SK-N-SH (cell line): ENCODE measurements at regions of chr17 and their contacts with region 1.

Region 1: GRCh38 chr17:2054512-2055291 is at the start of gene HIC1:
- DNase-seq: peak; percentile 93
- H3K4me3 ChIP-seq: peak within 1 kb of the TSS; percentile 57 to 62
- H3K27ac ChIP-seq: peak within 1 kb of the TSS in 1 of 2 experiments; percentile 55; a peak in 1 of 4 replicates
- H3K4me1 ChIP-seq: peaks cover 0 to 6% of the 10 kb centered on the region in 2 experiments; a peak in 1 of 4 replicates
- H3K27me3 ChIP-seq: no peaks in the 10 kb centered on the region
- CTCF ChIP-seq: peak; percentile 72
- EP300 ChIP-seq: no peak; a peak in 1 of 4 replicates
- RAD21 ChIP-seq: peak; percentile 88
- polyA plus RNA-seq, gene HIC1: 3.8 and 6.4 TPM in 2 replicates

Region 2: DNA sequence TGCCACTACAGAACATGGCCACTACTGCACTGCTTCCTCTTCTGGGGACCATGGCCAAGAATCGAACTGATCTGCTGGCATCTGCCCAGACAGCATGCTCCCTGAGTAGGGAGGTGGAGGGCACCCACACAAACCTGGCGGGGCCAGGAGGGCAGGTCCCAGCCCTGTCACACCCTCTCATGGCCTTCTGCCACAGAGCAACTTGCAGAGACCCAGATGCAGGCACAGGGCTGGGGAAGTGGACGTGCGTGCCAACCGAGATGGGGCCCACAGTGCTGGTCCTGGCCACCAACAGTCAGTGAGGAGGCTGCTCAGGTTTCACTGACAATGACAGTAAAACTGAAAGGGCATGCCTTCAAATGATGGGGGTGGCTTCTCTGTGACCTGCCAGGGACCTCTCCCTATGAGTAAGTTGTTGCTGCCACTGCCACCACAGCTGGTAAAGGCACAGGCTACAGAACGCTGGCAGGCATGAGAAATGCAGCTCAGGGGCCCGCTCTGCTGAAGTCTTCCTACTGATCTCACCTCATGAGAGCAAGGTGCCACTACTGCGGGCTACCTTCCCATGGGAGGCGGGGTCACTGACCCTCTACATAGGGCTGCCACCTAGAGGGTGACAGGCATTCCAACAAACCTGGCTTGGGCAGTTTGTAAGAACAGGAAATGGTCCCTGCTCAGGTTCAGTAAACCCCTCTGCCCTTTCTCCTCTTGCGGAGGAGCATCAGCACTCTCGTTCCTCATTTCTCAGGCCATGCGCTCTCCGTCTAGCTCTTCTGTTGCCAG is 15.7 kb after region 1 on chr17:
- CTCF ChIA-PET with region 1: interaction called, 81 read pairs
- POLR2A ChIA-PET with region 1: interaction called, 3 read pairs
- DNase-seq: no peak
- H3K4me3 ChIP-seq: no peak overlapping the region
- H3K27ac ChIP-seq: peak overlapping the region in 1 of 2 experiments; percentile 8; a peak in 1 of 4 replicates
- H3K4me1 ChIP-seq: peaks cover 27 to 49% of the 10 kb centered on the region in 2 experiments; a peak in 3 of 4 replicates
- H3K27me3 ChIP-seq: no peaks in the 10 kb centered on the region
- CTCF ChIP-seq: no peak
- EP300 ChIP-seq: no peak
- RAD21 ChIP-seq: no peak

Region 3: DNA sequence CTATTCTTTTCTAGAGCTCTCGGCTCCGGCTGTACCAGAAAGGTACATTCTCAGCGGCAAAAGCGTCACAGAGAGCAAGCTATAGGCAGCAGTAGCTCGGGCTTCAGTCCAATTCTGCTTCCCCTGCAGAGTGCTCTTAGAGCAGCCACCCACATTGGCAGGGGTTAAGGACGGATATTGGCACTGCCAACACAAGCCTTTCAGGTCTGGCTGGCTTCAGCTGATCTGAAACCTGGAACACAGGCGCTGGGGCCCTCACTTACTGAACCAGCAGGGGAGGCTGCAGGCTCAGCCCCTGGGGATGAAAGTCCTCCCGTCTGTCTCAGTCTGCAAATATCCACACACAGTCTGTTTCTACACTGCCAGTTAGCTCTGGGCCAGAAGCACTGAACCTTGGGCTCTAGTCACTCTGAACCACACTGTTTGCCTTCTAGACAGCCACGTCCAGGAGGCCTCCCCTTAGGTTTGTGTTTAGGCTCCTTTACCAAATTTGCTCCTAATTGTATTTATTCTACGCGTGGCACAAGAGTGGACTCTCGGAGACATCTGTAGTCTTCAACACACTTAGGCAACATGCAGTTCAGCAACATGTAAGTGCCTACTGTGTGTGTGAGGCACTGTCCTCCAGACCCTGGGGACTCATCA is 40.3 kb after region 1 on chr17:
- CTCF ChIA-PET with region 1: interaction called, 27 read pairs
- POLR2A ChIA-PET with region 1: no interaction called
- DNase-seq: peak; percentile 37
- H3K4me3 ChIP-seq: no peak overlapping the region
- H3K27ac ChIP-seq: peak overlapping the region in 1 of 2 experiments; percentile 29; a peak in 1 of 4 replicates
- H3K4me1 ChIP-seq: peaks cover 13 to 19% of the 10 kb centered on the region in 2 experiments; a peak in 3 of 4 replicates
- H3K27me3 ChIP-seq: no peaks in the 10 kb centered on the region
- CTCF ChIP-seq: peak; percentile 55
- EP300 ChIP-seq: no peak
- RAD21 ChIP-seq: peak; percentile 72

Region 4: DNA sequence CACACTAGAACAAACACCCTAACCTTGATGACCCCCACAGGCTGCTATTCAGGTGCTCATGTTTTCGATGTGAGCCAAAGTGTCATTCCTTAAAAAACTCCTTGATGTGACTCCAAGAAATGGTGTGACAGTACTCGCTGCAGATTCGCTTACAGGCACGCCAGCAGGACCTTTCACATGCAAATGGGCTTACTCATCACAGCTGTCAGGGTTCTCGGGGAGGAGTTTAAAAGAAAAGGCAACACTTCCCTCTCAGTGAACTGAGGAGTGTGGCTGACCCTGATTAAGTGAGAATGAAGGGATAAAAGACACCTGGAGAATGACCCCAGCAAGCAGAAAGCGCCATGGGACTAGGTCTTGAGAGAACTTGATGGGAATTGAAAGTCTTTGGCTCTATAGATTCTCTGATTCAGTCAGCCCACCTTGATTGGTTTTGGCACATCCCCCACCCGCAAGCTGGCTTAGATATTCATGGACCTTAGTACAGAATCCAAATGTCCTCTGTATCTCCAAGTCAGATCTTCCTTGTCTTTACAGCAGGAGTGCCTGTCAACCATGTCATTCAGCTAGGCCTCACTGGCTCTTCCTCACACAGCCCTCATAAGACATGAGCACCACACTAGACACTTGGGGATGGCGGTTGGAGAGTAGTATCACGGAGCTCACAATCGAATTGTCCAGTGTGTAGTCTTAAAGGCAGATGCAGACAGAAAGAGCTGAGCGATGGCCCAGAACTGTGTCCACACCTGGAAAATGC is 82.8 kb after region 1 on chr17:
- CTCF ChIA-PET with region 1: interaction called, 16 read pairs
- POLR2A ChIA-PET with region 1: no interaction called
- DNase-seq: no peak
- H3K4me3 ChIP-seq: no peak overlapping the region
- H3K27ac ChIP-seq: peak overlapping the region; percentile 69 to 85; a peak in 3 of 4 replicates
- H3K4me1 ChIP-seq: peaks cover 24 to 26% of the 10 kb centered on the region in 2 experiments
- H3K27me3 ChIP-seq: no peaks in the 10 kb centered on the region
- CTCF ChIP-seq: no peak
- EP300 ChIP-seq: no peak
- RAD21 ChIP-seq: no peak

Region 5: GRCh38 chr17:2207815-2208515 is 153.3 kb after region 1 on chr17:
- CTCF ChIA-PET with region 1: interaction called, 20 read pairs
- POLR2A ChIA-PET with region 1: no interaction called
- DNase-seq: no peak
- H3K4me3 ChIP-seq: no peak overlapping the region
- H3K27ac ChIP-seq: no peak overlapping the region
- H3K4me1 ChIP-seq: peaks cover 7 to 8% of the 10 kb centered on the region in 2 experiments; a peak in 3 of 4 replicates
- H3K27me3 ChIP-seq: no peaks in the 10 kb centered on the region
- CTCF ChIP-seq: no peak
- EP300 ChIP-seq: no peak
- RAD21 ChIP-seq: no peak

Region 6: DNA sequence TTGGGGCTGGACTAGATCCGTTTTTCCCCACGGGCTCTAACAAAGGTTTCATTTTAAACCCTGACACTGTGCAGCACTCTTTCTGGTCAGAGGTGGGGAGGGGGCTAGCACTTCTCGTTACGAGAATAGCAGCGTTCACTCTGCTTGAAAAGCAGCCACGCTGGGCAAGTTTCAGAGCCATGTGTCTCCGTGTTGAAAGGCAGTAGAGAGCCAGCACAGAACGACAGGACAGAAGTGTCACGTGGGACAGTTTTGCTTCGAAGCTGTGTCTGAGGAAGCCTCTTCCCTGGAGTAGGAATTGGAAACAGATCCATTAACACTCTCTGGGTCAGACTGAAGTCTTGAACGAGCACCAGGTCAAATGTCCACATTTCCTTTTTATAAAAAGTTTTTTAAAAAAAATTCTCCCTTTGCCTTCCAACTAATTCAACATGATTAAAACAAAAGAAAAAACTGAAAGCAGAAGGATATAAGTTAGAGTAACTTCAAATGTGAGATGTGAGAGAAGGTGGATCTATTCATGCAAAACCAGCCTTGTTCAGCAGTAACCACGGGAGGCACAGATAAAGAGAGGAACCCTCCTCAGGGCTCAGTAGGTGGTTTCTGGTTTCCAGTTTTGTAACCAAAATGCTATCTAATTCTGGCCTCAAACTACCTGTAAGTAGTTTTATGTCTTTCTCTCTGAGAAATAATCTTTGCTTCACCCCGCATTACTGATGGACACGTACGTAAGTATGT is 183.9 kb after region 1 on chr17:
- CTCF ChIA-PET with region 1: interaction called, 185 read pairs
- POLR2A ChIA-PET with region 1: no interaction called
- DNase-seq: no peak
- H3K4me3 ChIP-seq: no peak overlapping the region
- H3K27ac ChIP-seq: peak overlapping the region; percentile 40 to 93
- H3K4me1 ChIP-seq: peaks cover 8 to 29% of the 10 kb centered on the region in 2 experiments; a peak in 3 of 4 replicates
- H3K27me3 ChIP-seq: no peaks in the 10 kb centered on the region
- CTCF ChIP-seq: no peak
- EP300 ChIP-seq: no peak
- RAD21 ChIP-seq: no peak

Region 7: GRCh38 chr17:2282297-2282873 is 227.7 kb after region 1 on chr17:
- CTCF ChIA-PET with region 1: interaction called, 22 read pairs
- POLR2A ChIA-PET with region 1: no interaction called
- DNase-seq: peak; percentile 61
- H3K4me3 ChIP-seq: no peak overlapping the region
- H3K27ac ChIP-seq: peak overlapping the region in 1 of 2 experiments; percentile 26; a peak in 2 of 4 replicates
- H3K4me1 ChIP-seq: no peaks in the 10 kb centered on the region; a peak in 1 of 4 replicates
- H3K27me3 ChIP-seq: no peaks in the 10 kb centered on the region
- CTCF ChIP-seq: peak; percentile 74
- EP300 ChIP-seq: no peak
- RAD21 ChIP-seq: peak; percentile 70